ENCODE measurements at regions of chr11 and their contacts with region 1.

Region 1: GRCh38 chr11:82927254-82927880 is 25.8 kb downstream of the DDIAS start:
- DNase-seq: peak; percentile 56
- ATAC-seq: peak; percentile 91
- H3K4me3 Mint-ChIP-seq: no peak overlapping the region
- H3K27ac Mint-ChIP-seq: no peak overlapping the region
- H3K4me1 Mint-ChIP-seq: peaks cover 13% of the 10 kb centered on the region
- H3K27me3 Mint-ChIP-seq: no peaks in the 10 kb centered on the region

Region 2: DNA sequence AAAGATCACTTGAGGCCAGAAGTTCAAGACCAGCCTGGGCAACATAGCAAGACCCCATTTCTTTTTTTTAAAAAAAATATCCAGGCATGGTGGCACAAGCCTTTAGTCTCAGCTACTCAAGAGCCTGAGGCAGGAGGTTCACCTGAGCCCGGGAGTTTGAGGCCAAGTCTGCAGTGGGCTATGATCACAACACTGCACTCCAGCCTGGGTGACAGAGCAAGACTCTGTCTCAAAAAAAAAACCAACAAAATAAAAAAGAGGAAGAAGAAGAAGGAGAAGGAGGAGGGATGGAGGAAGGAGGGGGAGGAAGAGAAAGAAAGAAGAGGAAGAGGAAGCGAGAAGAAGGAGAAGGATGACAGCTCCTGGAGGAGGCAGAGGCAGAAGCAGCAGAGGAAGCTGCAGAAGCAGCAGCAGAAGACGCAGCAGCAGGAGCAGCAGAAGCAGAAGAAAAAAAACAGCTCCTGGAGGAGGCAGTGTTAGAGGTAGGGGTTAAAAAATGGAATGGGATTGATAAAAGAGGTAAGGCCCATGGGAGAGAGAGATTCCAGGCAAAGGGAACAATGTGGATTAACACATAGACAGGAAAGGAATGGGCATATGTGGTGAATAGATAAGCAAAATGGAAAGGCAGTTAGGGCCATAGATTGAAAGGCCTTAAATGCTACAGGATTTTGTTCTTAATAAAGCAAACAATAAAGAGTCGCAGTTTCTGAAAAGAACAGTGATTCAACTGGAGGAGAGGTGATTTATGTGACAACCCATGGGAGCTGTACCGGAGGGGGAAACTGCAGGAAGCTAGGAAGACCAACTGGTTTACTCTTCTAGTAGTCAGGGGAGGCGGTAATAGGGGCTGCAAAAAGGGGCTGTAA is 38.0 kb before region 1 on chr11:
- CTCF ChIA-PET with region 1: no interaction called
- POLR2A ChIA-PET with region 1: no interaction called
- DNase-seq: no peak
- ATAC-seq: no peak
- H3K4me3 Mint-ChIP-seq: no peak overlapping the region
- H3K27ac Mint-ChIP-seq: no peak overlapping the region
- H3K4me1 Mint-ChIP-seq: no peaks in the 10 kb centered on the region
- H3K27me3 Mint-ChIP-seq: no peaks in the 10 kb centered on the region

Region 3: GRCh38 chr11:82906244-82906654 is 21.1 kb before region 1 on chr11:
- CTCF ChIA-PET with region 1: interaction called, 16 read pairs
- POLR2A ChIA-PET with region 1: interaction called, 4 read pairs
- DNase-seq: no peak
- ATAC-seq: no peak
- H3K4me3 Mint-ChIP-seq: no peak overlapping the region
- H3K27ac Mint-ChIP-seq: no peak overlapping the region
- H3K4me1 Mint-ChIP-seq: peaks cover 48% of the 10 kb centered on the region
- H3K27me3 Mint-ChIP-seq: no peaks in the 10 kb centered on the region

Region 4: DNA sequence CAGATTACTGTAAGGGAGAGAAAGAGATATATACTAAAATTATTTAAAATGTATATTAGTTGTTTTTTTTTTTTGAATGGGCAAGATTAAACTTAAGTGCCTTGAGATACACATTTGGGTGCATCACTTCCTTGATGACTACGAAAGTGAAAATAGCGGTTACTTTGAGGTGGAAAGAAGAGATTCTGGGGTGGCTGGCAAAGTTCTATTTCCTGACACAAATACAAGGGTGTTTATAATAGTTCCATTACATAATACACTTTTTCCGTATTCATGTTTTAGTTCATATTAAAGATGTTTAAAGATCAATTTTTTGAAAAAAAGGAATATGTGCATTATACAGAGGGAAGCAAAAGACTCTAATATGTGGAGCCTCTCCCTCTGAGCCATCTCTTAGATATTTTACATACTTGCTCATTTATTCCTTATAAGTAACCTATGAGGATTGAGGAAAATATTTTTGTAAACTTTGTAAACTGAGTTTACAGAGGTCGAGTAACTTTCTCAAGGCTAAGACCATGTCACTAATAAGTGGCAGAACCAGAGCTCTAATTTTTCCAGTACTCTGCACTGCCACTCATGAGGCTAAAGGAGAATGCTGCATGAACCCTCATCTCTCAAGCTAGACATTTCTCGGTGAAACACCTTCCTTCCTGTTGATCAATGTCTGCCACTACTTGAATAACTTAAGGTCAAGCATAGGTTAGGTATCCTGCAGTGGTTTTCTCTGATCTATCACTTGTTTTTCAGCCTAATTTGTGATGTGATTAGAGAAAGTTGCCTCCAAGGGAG is 32.8 kb after region 1 on chr11:
- CTCF ChIA-PET with region 1: interaction called, 11 read pairs
- POLR2A ChIA-PET with region 1: no interaction called
- DNase-seq: peak; percentile 76
- ATAC-seq: peak; percentile 84
- H3K4me3 Mint-ChIP-seq: peak overlapping the region; percentile 58
- H3K27ac Mint-ChIP-seq: peak overlapping the region; percentile 85
- H3K4me1 Mint-ChIP-seq: peaks cover 64% of the 10 kb centered on the region
- H3K27me3 Mint-ChIP-seq: peaks cover 3% of the 10 kb centered on the region

Region 5: DNA sequence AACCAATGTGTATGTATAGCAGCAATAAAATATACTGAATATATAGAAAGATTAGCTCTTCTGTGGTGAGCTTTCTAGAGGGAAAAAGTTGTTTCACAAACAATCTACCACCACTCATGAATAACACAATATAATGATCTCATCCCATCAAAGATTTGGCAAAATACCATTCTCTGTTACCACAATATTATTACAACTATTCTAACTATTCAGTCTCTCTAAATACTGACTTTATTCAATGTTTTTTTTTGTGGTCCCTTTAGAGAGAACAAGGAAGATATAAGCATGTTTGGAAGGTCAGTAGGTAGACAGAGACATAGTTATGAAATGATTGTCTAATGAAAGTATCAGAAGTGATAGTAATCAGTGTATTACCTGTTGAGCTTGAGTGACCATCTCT is 351.0 kb after region 1 on chr11:
- CTCF ChIA-PET with region 1: no interaction called
- POLR2A ChIA-PET with region 1: no interaction called
- DNase-seq: no peak
- ATAC-seq: no peak
- H3K4me3 Mint-ChIP-seq: no peak overlapping the region
- H3K27ac Mint-ChIP-seq: no peak overlapping the region
- H3K4me1 Mint-ChIP-seq: peaks cover 9% of the 10 kb centered on the region
- H3K27me3 Mint-ChIP-seq: no peaks in the 10 kb centered on the region

Measured in activated CD8-positive, alpha-beta T cell treated with anti-CD3 and anti-CD28 coated beads, Interleukin-2, amount 10 ng/mL, durations not matched to agents 7 days and 5 days (primary cell).